ENCODE measurements at regions of chr17 and their contacts with region 1.

Region 1: GRCh38 chr17:64506576-64507477 is at the start of gene CEP95:
- DNase-seq: peak in 3 of 4 experiments; percentile 80 to 95 (median 88)
- ATAC-seq: peak; percentile 76
- H3K4me3 ChIP-seq: peak within 1 kb of the TSS; percentile 77
- H3K27ac ChIP-seq: peak within 1 kb of the TSS; percentile 97
- H3K4me1 ChIP-seq: peaks cover 6 to 13% of the 10 kb centered on the region in 2 experiments; a peak in 3 of 5 replicates
- H3K27me3 ChIP-seq: no peaks in the 10 kb centered on the region
- CTCF ChIP-seq: no peak
- EP300 ChIP-seq: peak; percentile 15; the same call in 1 of the 2 replicates
- POLR2A ChIP-seq: peak; percentile 72
- RAD21 ChIP-seq: no peak
- polyA plus RNA-seq, gene CEP95: 26.7 to 40.0 TPM

Region 2: DNA sequence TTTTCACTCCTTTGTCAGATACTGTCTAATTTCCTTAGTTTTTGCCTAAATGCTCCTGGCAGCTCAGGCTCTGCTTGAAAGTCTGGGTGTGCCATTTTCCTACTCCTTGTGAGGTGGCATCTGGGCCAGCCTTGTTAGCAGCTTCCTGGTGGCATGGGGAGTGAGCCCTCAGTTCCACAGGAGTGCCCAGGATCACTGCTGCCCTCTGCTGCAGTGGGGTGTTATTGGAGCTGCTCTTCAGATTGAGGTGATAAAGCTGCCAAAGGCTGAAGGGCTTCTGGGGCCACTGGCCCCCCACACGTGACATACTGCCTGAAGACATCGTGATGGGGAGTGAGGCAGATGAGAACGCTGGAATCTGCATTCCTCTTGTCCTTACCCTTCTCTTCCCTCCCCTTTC is 27.3 kb after region 1 on chr17:
- CTCF ChIA-PET with region 1: no interaction called
- POLR2A ChIA-PET with region 1: interaction called, 36 read pairs
- in situ Hi-C with region 1: no loop called
- intact Hi-C with region 1: no loop called
- DNase-seq: peak in 2 of 4 experiments; percentile 20 to 22
- ATAC-seq: peak; percentile 4; the same call in 1 of the 3 replicates
- H3K4me3 ChIP-seq: no peak overlapping the region
- H3K27ac ChIP-seq: no peak overlapping the region
- H3K4me1 ChIP-seq: peaks cover 0 to 19% of the 10 kb centered on the region in 2 experiments; a peak in 3 of 5 replicates
- H3K27me3 ChIP-seq: no peaks in the 10 kb centered on the region
- CTCF ChIP-seq: 0 out of 6 replicates have a peak, but pooled peaks have one; percentile 10 to 12 (median 12)
- EP300 ChIP-seq: no peak
- POLR2A ChIP-seq: no peak
- RAD21 ChIP-seq: no peak

Region 3: GRCh38 chr17:64599187-64599676 is 92.4 kb after region 1 on chr17:
- CTCF ChIA-PET with region 1: interaction called, 3 read pairs
- POLR2A ChIA-PET with region 1: interaction called, 22 read pairs
- in situ Hi-C with region 1: no loop called
- intact Hi-C with region 1: loop called (anchors 5 kb)
- DNase-seq: peak; percentile 30 to 88 (median 54)
- ATAC-seq: peak; percentile 98
- H3K4me3 ChIP-seq: peak overlapping the region; percentile 29
- H3K27ac ChIP-seq: peak overlapping the region; percentile 84
- H3K4me1 ChIP-seq: peaks cover 5 to 9% of the 10 kb centered on the region in 2 experiments; a peak in 4 of 5 replicates
- H3K27me3 ChIP-seq: no peaks in the 10 kb centered on the region
- CTCF ChIP-seq: no peak
- EP300 ChIP-seq: no peak
- POLR2A ChIP-seq: peak; percentile 82
- RAD21 ChIP-seq: no peak

Region 4: DNA sequence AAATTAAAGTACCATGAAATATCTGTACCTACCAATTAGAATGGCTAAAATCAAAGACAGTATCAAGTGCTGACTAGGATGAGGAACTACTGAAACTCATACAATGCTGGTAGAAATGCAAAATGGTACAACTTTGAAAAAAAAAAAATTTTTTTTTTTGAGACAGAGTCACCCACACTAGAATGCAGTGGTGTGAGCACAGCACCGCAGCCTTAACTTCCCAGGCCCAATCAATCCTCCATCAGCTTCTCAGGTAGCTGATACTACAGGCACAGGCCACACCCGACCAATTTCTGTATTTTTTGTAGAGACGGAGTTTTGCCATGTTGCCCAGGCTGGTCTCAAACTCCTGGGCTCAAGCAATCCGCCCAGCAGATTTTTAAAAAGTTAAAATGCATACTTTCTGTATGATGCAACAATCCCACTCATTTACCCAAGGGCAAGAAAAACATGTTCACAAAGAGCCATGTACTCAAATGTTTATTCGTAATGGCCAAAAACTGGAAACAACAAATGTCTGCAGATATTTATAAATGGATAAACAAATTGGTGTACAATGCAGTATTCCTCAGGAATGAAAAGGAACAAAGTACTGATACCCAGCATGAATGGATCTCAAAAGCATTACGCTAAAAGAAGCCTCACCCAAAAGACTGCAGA is 146.6 kb after region 1 on chr17:
- CTCF ChIA-PET with region 1: no interaction called
- POLR2A ChIA-PET with region 1: interaction called, 38 read pairs
- in situ Hi-C with region 1: no loop called
- intact Hi-C with region 1: no loop called
- DNase-seq: no peak
- ATAC-seq: peak; percentile 51
- H3K4me3 ChIP-seq: no peak overlapping the region
- H3K27ac ChIP-seq: 0 out of 3 replicates have a peak overlapping the region, but pooled peaks have one; percentile 9
- H3K4me1 ChIP-seq: peaks cover 2 to 13% of the 10 kb centered on the region in 2 experiments; a peak in 3 of 5 replicates
- H3K27me3 ChIP-seq: no peaks in the 10 kb centered on the region
- CTCF ChIP-seq: no peak
- EP300 ChIP-seq: no peak
- POLR2A ChIP-seq: no peak
- RAD21 ChIP-seq: no peak

Region 5: GRCh38 chr17:64736804-64737492 is 230.1 kb after region 1 on chr17:
- CTCF ChIA-PET with region 1: no interaction called
- POLR2A ChIA-PET with region 1: interaction called, 4 read pairs
- in situ Hi-C with region 1: no loop called
- intact Hi-C with region 1: loop called (anchors 10 kb)
- DNase-seq: peak in 1 of 4 experiments; percentile 51
- ATAC-seq: peak; percentile 86
- H3K4me3 ChIP-seq: no peak overlapping the region
- H3K27ac ChIP-seq: no peak overlapping the region
- H3K4me1 ChIP-seq: peaks cover 2 to 4% of the 10 kb centered on the region in 2 experiments; a peak in 1 of 5 replicates
- H3K27me3 ChIP-seq: no peaks in the 10 kb centered on the region
- CTCF ChIP-seq: peak; percentile 54 to 71 (median 69)
- EP300 ChIP-seq: no peak
- POLR2A ChIP-seq: no peak
- RAD21 ChIP-seq: peak; percentile 55 to 75